Heart left ventricle (tissue), 16 donors: ENCODE measurements at regions of chr13 and their contacts with region 1.

Region 1: DNA sequence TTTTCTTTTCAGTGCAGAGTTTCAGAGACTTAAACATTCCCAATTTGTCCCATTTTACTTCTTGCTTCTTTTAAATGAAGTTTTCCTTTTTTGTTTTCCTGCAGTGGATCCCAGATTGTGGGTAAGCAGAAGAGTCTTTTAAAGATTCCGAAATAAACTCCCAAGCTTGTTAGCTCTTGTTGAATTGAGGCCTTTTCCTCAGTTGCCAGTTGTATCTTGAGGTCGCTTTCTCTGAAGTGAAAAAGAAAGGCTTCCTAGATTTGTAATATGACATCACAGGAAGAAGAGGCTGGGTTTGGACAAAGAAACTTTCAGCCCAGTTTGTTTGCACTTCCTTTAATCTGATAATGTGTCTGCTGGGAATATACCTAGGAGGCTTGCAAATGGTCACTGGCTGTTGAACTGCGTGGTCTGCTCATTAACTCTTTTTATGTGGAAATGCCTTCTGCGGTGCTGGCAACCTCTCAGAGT is at the start of gene LPAR6:
- DNase-seq: peak in 2 of 5 donors; percentile 28 to 50
- ATAC-seq: peak; percentile 58 to 91 (median 86)
- H3K4me3 ChIP-seq: peak within 1 kb of the TSS; percentile 30 to 75 (median 62)
- H3K27ac ChIP-seq: peak within 1 kb of the TSS; percentile 52 to 94 (median 81)
- H3K4me1 ChIP-seq: peaks cover 0 to 39% (median 0%) of the 10 kb centered on the region in 12 donors
- H3K27me3 ChIP-seq: no peaks in the 10 kb centered on the region
- CTCF ChIP-seq: no peak
- POLR2A ChIP-seq: peak in 1 of 2 donors; percentile 85
- total RNA-seq, gene LPAR6: 6.7 to 47.9 (median 16.6) TPM

Region 2: DNA sequence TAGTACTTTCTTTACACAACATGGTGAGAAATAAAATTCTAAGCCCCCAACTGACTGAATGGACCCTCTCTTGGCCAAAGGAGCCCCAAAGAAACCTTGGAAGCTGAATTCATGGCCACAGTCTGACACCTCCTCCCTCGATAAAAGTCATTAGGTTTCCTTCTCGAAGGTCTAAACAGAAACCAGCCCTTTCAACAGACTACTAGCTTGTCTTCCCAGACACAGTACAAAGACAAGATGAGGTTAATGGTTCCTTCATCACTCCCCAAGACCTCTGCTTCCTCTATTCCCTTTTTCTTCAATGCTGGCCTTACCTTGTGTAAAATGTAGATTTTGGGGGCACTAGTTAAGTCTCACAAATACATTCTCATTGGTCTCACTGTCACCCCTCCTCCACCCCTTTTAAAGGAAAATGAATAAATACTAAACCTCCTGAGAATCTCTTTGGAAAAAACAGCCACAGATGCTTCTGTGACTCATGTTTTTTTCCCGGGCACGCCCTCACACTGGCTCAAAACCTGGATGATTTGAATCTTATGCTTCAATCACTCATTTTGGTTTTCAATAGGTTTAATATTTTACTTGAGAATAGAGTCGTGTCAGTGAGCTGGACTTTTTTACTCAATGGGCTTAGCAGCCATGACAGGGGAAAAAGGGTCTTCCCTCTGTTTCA is 252.2 kb before region 1 on chr13:
- intact Hi-C with region 1: no loop called
- DNase-seq: peak in 3 of 5 donors; percentile 24 to 50 (median 40)
- ATAC-seq: peak; percentile 32 to 71 (median 59)
- H3K4me3 ChIP-seq: no peak overlapping the region
- H3K27ac ChIP-seq: peak overlapping the region; percentile 3 to 92 (median 66)
- H3K4me1 ChIP-seq: peaks cover 0 to 77% (median 12%) of the 10 kb centered on the region in 12 donors
- H3K27me3 ChIP-seq: no peaks in the 10 kb centered on the region
- CTCF ChIP-seq: no peak
- POLR2A ChIP-seq: no peak

Region 3: DNA sequence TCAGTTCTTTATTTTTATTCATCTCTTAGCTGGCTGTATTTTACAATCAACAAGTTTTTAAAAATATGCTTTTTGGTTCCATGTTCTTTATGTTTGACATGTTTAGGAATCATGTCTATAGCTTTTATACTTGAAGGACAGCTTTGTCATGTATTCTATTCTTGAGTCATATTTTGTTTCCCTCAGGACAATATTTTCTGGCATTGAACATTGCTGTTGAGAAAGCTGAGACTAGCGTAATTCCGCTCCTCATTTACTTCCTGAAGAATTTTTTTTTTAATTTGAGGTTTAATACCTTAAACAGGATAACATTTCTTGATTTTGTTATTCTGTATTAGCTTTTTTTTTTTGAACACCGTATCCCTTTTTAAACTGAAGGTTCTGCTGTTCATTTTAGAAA is 56.2 kb before region 1 on chr13:
- intact Hi-C with region 1: loop called in 1 of 10 experiments (anchors 5 kb)
- DNase-seq: no peak
- ATAC-seq: peak in 1 of 4 donors; percentile 58
- H3K4me3 ChIP-seq: no peak overlapping the region
- H3K27ac ChIP-seq: peak overlapping the region in 5 of 12 donors; percentile 3 to 20 (median 11)
- H3K4me1 ChIP-seq: peaks cover 0 to 7% (median 0%) of the 10 kb centered on the region in 12 donors
- H3K27me3 ChIP-seq: no peaks in the 10 kb centered on the region
- CTCF ChIP-seq: no peak
- POLR2A ChIP-seq: no peak

Region 4: DNA sequence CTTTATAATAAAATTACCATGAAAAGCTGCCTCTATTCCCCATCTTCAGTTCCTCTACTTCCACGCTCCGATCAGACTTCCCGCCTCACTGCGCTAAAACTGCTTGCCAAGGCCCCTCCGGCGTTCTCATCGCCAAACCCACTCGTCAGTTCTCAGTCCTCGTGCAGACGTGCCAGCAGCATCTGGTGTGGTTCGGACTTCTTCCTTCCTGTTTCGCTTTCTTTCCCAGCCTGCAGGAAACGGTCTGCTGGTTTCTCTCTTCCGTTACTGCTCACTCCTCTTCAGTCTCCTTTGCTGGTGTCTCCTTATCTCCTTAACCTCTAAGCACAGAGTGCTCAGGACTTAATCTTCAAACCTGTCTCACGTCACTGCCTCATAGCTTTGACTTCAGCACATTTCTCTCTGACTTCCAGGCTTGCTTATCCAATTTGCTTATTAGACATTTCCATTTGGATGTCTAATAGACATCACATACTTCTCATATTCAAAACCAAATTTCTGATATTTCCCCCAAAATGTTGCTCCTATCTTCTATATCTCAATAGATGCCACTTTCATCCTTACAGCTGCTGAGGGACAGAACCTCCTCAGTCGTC is 79.7 kb after region 1 on chr13:
- intact Hi-C with region 1: loop called in 3 of 10 experiments (anchors 5 to 10 kb)
- DNase-seq: peak; percentile 86 to 90 (median 88)
- ATAC-seq: peak; percentile 89 to 95 (median 92)
- H3K4me3 ChIP-seq: peak overlapping the region in 10 of 12 donors; percentile 21 to 55 (median 43)
- H3K27ac ChIP-seq: peak overlapping the region; percentile 55 to 93 (median 76)
- H3K4me1 ChIP-seq: peaks cover 0 to 80% (median 24%) of the 10 kb centered on the region in 12 donors
- H3K27me3 ChIP-seq: no peaks in the 10 kb centered on the region
- CTCF ChIP-seq: no peak
- POLR2A ChIP-seq: no peak

Region 5: DNA sequence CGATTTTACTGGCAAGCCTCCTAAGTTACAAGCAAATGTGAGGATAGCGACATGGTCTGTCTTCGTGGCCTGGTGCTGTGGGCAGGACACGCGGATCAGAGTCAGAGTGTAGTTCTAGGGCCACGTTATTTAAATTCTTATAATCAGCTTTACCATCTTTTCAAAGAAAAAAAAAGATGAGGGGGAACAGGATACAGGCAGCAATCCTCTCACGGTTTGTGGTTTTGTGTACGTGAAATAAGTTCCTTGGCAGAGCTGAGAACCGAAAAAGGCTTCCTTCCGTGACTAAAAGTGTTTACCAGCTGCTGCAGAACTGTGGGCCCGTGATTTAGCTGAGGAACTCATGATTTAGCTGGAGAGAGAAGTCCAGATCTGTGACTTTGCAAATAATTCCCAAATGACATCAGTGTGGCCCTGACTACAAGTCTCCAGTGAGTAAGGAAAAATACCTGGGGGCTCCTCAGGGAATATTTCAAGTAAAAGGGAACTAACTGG is 92.7 kb after region 1 on chr13:
- intact Hi-C with region 1: loop called in 1 of 10 experiments (anchors 5 kb)
- DNase-seq: peak in 4 of 5 donors; percentile 47 to 70 (median 62)
- ATAC-seq: peak; percentile 69 to 84 (median 72)
- H3K4me3 ChIP-seq: peak overlapping the region in 7 of 12 donors; percentile 1 to 30 (median 23)
- H3K27ac ChIP-seq: peak overlapping the region; percentile 62 to 96 (median 82)
- H3K4me1 ChIP-seq: peaks cover 0 to 79% (median 29%) of the 10 kb centered on the region in 12 donors
- H3K27me3 ChIP-seq: no peaks in the 10 kb centered on the region
- CTCF ChIP-seq: no peak
- POLR2A ChIP-seq: no peak

Region 6: GRCh38 chr13:48532506-48533499 is 119.9 kb after region 1 on chr13 and contains the start of gene RCBTB2:
- intact Hi-C with region 1: loop called in 3 of 10 experiments (anchors 2 to 5 kb)
- DNase-seq: peak; percentile 99 to 100 (median 99)
- ATAC-seq: peak; percentile 97 to 98 (median 97)
- H3K4me3 ChIP-seq: peak within 1 kb of the TSS; percentile 33 to 90 (median 72)
- H3K27ac ChIP-seq: peak within 1 kb of the TSS; percentile 95 to 99 (median 98)
- H3K4me1 ChIP-seq: peaks cover 0 to 73% (median 20%) of the 10 kb centered on the region in 12 donors
- H3K27me3 ChIP-seq: no peaks in the 10 kb centered on the region
- CTCF ChIP-seq: peak in 1 of 12 donors; percentile 10
- POLR2A ChIP-seq: peak in 1 of 2 donors; percentile 87
- total RNA-seq, gene RCBTB2: 5.9 to 16.2 (median 11.8) TPM